ENCODE measurements at regions of chr2 and their contacts with region 1.

Region 1: GRCh38 chr2:234500394-234501006 is 3.6 kb upstream of the ARL4C start:
- DNase-seq: peak; percentile 81
- ATAC-seq: peak; percentile 65
- H3K4me3 Mint-ChIP-seq: no peak overlapping the region
- H3K27ac Mint-ChIP-seq: no peak overlapping the region
- H3K4me1 Mint-ChIP-seq: peaks cover 26% of the 10 kb centered on the region
- H3K27me3 Mint-ChIP-seq: no peaks in the 10 kb centered on the region
- CTCF ChIP-seq: peak; percentile 88

Region 2: GRCh38 chr2:233976690-233977294 is 523.7 kb before region 1 on chr2:
- CTCF ChIA-PET with region 1: interaction called, 5 read pairs
- POLR2A ChIA-PET with region 1: interaction called, 4 read pairs
- intact Hi-C with region 1: loop called (anchors 2 kb)
- DNase-seq: no peak
- ATAC-seq: peak; percentile 52
- H3K4me3 Mint-ChIP-seq: no peak overlapping the region
- H3K27ac Mint-ChIP-seq: no peak overlapping the region
- H3K4me1 Mint-ChIP-seq: peaks cover 30% of the 10 kb centered on the region
- H3K27me3 Mint-ChIP-seq: no peaks in the 10 kb centered on the region
- CTCF ChIP-seq: peak; percentile 65

Region 3: DNA sequence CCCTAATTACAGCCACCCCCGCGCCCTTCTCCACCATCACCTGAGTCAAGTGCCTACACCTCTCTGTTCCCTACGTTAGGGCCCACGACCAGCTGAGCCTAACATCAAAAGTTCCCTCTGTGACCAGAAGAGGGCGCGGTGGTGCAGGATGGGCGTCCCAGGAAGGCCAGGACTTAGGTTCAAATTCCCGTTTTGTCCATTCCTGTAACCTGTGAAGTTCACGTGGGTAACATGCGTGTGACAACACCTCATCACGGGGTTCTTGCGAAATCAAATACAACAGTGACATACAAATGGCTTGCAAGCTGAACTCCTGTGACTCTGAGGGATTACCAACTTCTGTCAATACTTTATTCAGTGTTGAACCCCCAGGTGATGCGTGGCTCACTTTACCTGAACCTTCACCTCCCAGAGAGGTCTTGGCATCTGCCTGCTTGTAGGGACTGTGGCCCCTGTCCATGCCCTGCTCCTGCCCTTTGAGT is 211.5 kb before region 1 on chr2:
- CTCF ChIA-PET with region 1: interaction called, 25 read pairs
- POLR2A ChIA-PET with region 1: interaction called, 10 read pairs
- intact Hi-C with region 1: no loop called
- DNase-seq: peak; percentile 78
- ATAC-seq: no peak
- H3K4me3 Mint-ChIP-seq: no peak overlapping the region
- H3K27ac Mint-ChIP-seq: peak overlapping the region; percentile 99
- H3K4me1 Mint-ChIP-seq: peaks cover 61% of the 10 kb centered on the region
- H3K27me3 Mint-ChIP-seq: no peaks in the 10 kb centered on the region
- CTCF ChIP-seq: peak; percentile 92

Region 4: DNA sequence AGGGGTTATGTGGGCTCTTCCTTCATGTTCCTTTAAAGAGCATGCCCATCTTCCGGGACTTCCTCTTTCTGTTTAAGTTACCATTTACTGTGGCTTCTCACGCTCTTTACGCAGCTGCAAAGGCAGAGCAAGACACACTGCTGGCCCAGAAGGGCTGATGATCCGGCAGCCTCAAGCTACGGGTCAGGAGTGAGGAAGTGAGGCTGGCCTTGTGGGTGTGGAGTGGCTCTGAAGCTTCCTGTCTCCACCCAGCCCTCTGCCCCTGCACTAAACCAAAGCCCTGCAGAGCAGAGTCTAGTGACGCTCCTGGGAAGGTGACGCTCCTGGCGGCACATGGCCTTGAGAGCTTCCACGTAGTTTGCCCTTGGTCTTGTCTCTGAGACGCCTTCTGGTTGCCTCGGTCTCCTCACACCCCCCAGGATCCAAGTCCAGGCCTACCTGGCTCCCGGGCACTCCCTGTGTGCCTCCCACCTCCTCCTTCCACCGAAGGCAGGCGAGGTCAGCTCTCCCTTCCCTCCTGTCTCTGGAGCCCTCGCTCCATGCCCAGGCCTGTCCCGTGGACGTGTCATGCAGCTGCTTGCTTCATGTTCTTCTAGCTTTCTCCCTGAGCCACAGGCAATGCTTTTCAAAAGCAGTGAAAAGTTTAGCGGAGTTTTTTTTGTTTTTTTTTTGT is 54.0 kb before region 1 on chr2:
- CTCF ChIA-PET with region 1: interaction called, 4 read pairs
- POLR2A ChIA-PET with region 1: interaction called, 39 read pairs
- intact Hi-C with region 1: no loop called
- DNase-seq: peak; percentile 90
- ATAC-seq: peak; percentile 94
- H3K4me3 Mint-ChIP-seq: peak overlapping the region; percentile 55
- H3K27ac Mint-ChIP-seq: peak overlapping the region; percentile 94
- H3K4me1 Mint-ChIP-seq: peaks cover 71% of the 10 kb centered on the region
- H3K27me3 Mint-ChIP-seq: no peaks in the 10 kb centered on the region
- CTCF ChIP-seq: no peak

Region 5: GRCh38 chr2:234476766-234477165 is 23.7 kb before region 1 on chr2:
- CTCF ChIA-PET with region 1: no interaction called
- POLR2A ChIA-PET with region 1: no interaction called
- intact Hi-C with region 1: no loop called
- DNase-seq: no peak
- ATAC-seq: no peak
- H3K4me3 Mint-ChIP-seq: no peak overlapping the region
- H3K27ac Mint-ChIP-seq: no peak overlapping the region
- H3K4me1 Mint-ChIP-seq: peaks cover 41% of the 10 kb centered on the region
- H3K27me3 Mint-ChIP-seq: no peaks in the 10 kb centered on the region
- CTCF ChIP-seq: no peak

Region 6: DNA sequence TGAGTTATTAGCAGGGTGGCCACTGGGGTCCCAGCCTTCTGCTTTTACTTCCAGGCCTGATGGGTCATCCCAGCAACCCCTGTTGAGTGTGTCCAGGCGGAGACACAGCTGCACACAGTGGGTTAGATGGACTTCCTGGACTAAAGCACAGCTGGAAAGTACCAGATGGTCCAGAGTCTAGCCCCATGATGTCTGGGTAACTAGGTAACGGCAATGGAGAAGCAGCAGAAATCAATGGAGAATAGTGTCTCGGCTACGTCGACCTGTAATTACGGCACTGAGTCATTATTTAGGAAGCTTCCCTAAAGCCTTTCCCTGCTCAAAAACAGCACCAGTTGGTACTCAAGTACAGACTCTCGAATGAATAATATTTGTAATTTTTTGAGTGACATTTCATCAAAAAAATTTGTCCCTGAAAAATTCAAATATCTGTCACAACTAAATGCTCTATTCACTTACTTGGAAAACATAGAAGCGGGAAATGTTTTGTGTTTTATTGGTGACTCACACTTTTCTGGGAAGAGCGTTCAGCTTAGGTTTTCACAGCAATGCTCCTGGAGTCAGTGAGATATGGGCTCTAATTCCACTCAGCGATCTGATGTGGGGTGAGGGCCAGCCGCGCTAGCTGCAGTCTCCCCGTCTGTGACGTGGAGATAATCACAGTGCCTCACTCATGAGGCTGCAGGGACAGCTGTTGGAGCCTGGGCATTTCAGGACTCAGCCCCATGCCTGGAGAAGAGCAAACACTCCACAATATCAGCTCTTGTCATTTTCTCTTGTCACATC is 12.6 kb after region 1 on chr2:
- CTCF ChIA-PET with region 1: interaction called, 11 read pairs
- POLR2A ChIA-PET with region 1: interaction called, 3 read pairs
- intact Hi-C with region 1: no loop called
- DNase-seq: no peak
- ATAC-seq: no peak
- H3K4me3 Mint-ChIP-seq: no peak overlapping the region
- H3K27ac Mint-ChIP-seq: no peak overlapping the region
- H3K4me1 Mint-ChIP-seq: peaks cover 4% of the 10 kb centered on the region
- H3K27me3 Mint-ChIP-seq: no peaks in the 10 kb centered on the region
- CTCF ChIP-seq: no peak

Region 7: DNA sequence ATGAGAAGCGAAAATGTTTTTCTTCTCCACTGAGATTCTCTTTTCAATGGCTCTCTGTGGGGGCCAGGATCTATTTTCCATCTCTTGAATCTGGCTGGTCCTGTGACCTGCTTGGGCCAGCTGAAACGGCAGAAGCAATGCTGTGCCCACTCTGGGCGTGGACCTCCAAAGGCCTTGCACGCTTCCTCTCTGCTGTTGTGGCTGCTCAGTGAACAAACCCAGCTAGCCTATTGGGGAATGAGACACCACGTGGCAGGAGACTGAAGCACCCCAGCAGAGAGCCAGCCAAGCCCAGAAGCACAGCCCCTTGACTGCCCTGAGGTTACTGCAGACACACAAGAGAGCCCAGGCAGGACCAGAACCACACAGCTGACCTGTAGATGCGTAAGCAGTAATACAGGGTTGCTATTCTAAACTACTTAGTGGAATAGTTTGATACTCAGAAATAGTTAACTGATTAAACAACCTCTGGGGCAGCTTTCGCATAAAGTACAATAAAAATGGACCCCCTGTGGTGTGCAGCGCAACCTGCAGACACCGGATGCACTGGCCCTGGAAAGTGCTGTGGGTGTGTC is 229.7 kb after region 1 on chr2:
- CTCF ChIA-PET with region 1: no interaction called
- POLR2A ChIA-PET with region 1: no interaction called
- intact Hi-C with region 1: no loop called
- DNase-seq: no peak
- ATAC-seq: no peak
- H3K4me3 Mint-ChIP-seq: no peak overlapping the region
- H3K27ac Mint-ChIP-seq: no peak overlapping the region
- H3K4me1 Mint-ChIP-seq: no peaks in the 10 kb centered on the region
- H3K27me3 Mint-ChIP-seq: peaks cover 5% of the 10 kb centered on the region
- CTCF ChIP-seq: no peak

Region 8: DNA sequence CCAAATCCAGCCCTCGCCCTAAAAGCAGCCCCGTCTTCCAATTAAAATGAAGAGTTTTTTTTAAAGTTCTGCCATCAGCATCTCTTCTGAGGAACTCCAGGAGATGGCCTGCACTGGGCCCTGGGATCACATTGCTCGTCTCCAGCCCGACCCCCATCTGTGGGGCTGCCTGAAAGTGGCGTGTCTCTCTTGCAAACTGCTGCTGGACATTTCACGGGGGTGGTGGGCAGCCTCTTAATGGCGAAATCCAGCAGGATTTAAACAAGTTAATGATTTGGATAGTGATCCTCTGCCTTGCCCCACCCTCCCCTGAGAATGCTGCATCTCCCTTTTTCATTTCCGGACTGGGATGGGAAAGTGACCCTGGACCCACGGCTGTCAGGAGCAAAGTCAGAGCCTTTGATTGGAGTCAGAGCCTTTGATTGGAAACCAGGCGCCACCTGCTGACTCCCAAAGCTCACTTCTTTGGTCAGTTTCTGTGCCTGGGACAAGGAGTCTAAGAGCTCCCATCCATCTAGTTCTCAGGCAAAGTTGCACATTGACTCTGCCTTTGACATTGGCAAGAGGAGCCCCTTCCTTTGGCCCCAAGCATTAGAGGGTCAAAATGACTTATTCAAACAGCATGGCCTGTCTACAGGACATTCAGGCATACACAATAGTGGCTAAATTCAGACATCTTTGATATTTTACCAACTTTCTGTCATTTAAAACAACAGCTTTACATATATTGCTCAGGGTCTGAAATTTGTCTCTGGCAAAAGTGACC is 606.6 kb after region 1 on chr2:
- CTCF ChIA-PET with region 1: no interaction called
- POLR2A ChIA-PET with region 1: no interaction called
- intact Hi-C with region 1: no loop called
- DNase-seq: peak; percentile 49
- ATAC-seq: no peak
- H3K4me3 Mint-ChIP-seq: no peak overlapping the region
- H3K27ac Mint-ChIP-seq: no peak overlapping the region
- H3K4me1 Mint-ChIP-seq: no peaks in the 10 kb centered on the region
- H3K27me3 Mint-ChIP-seq: no peaks in the 10 kb centered on the region
- CTCF ChIP-seq: peak; percentile 35

Measured in activated CD8-positive, alpha-beta T cell treated with anti-CD3 and anti-CD28 coated beads for 36 hours (primary cell).